Heart left ventricle (tissue), 16 donors: ENCODE measurements at regions of chr4 and their contacts with region 1.

Region 1: GRCh38 chr4:134650461-134650860 is 448.9 kb upstream of the PABPC4L start:
- DNase-seq: no peak
- ATAC-seq: no peak
- H3K4me3 ChIP-seq: no peak overlapping the region
- H3K27ac ChIP-seq: no peak overlapping the region
- H3K4me1 ChIP-seq: no peaks in the 10 kb centered on the region
- H3K27me3 ChIP-seq: no peaks in the 10 kb centered on the region
- CTCF ChIP-seq: no peak
- POLR2A ChIP-seq: no peak

Region 2: GRCh38 chr4:134691915-134692314 is 41.5 kb after region 1 on chr4:
- intact Hi-C with region 1: loop called in 1 of 10 experiments (anchors 2 kb)
- DNase-seq: no peak
- ATAC-seq: no peak
- H3K4me3 ChIP-seq: no peak overlapping the region
- H3K27ac ChIP-seq: no peak overlapping the region
- H3K4me1 ChIP-seq: no peaks in the 10 kb centered on the region
- H3K27me3 ChIP-seq: no peaks in the 10 kb centered on the region
- CTCF ChIP-seq: no peak
- POLR2A ChIP-seq: no peak

Region 3: DNA sequence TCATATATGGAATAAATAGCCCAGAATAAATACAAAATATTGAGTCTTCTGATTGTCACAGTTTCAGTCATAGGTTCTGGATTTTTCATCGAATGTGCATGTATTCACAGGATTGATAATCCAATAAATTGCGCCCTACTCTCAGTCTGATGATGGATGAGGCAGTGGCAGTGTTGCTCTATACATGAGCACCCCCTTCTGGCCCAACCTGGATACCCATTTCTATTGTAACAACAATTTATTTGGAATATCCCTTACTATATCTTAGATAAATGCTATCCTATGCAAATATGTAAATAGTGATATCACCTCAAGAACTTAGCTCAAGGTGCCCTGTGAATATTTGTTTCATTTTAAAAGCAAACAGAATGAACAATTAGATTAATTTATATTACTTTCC is 284.9 kb after region 1 on chr4:
- intact Hi-C with region 1: no loop called
- DNase-seq: no peak
- ATAC-seq: no peak
- H3K4me3 ChIP-seq: no peak overlapping the region
- H3K27ac ChIP-seq: no peak overlapping the region
- H3K4me1 ChIP-seq: no peaks in the 10 kb centered on the region
- H3K27me3 ChIP-seq: no peaks in the 10 kb centered on the region
- CTCF ChIP-seq: peak in 3 of 12 donors; percentile 14 to 28 (median 20)
- POLR2A ChIP-seq: no peak